Colonic mucosa (tissue), 4 donors: ENCODE measurements at regions of chr16 and their contacts with region 1.

Region 1: DNA sequence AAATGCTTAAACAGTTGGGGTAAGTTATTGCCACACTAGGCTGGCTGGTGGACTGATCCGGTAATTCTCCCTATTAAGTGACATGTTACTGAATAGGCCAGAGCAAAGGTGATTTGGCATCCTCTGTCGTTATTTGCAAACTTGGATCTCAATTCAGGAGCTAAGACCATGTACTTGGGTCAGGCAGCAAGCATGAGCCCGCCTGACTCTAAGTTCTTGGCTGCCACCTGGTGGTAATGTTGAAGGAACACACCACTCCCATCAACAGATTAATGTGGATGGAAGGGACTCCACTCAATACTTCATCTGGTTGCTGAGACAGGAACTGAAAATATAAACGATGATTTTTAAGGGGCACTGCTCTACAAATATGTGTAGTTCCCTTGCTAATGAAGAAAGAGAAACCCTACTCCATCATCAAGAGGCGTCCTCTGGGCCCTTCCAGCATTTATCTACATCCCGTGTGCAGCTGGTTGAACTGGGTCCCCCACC is 70.8 kb downstream of the EMP2 start:
- DNase-seq: peak; percentile 69
- H3K4me3 ChIP-seq: no peak overlapping the region
- H3K27ac ChIP-seq: no peak overlapping the region
- H3K4me1 ChIP-seq: no peaks in the 10 kb centered on the region
- H3K27me3 ChIP-seq: no peaks in the 10 kb centered on the region
- CTCF ChIP-seq: peak; percentile 78

Region 2: DNA sequence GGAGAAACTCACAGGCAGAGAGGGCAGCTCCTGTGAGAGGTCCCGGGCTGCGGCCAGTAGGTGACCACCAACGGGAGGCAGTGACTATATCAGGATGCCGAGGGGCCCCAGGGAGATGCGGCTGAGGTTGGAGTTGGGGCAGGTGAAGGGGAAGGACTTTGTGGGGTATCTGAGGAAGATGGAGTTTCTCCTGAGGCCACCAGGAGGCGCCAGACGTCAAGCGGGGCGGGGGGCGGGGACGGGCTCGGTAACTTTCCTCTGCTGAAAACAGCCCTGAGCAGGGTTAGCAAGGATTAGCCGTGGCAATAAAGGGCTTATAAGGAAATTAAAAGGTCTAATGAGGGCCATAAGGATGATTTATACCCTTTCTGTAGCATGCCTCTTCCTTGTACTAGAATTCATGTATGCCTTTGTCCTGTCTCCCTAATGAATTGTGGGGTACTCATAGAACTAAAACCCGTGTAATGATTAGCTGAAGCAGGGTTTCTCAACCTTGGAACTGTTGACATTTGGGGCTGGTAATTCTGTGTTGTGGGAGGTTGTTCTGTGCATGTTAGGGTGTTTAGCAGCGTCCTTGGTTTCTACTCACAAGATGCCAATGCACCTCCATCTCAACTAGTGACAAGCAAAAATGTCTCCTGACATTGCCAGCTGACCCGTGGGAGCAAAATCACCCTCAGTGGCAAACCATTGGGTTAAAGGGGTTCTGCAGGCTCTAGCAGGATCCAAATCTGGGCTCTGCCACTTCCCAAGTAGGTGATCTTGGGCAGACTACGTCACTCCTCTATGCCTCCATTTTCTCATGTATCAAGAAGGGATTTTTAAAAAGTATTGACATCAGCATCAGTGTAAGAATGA is 252.6 kb before region 1 on chr16:
- intact Hi-C with region 1: loop called (anchors 2 kb)
- DNase-seq: peak; percentile 27
- H3K4me3 ChIP-seq: no peak overlapping the region
- H3K27ac ChIP-seq: no peak overlapping the region
- H3K4me1 ChIP-seq: no peaks in the 10 kb centered on the region
- H3K27me3 ChIP-seq: no peaks in the 10 kb centered on the region
- CTCF ChIP-seq: peak; percentile 63

Region 3: GRCh38 chr16:10314811-10315210 is 194.8 kb before region 1 on chr16:
- intact Hi-C with region 1: loop called (anchors 10 kb)
- DNase-seq: no peak
- H3K4me3 ChIP-seq: no peak overlapping the region
- H3K27ac ChIP-seq: no peak overlapping the region
- H3K4me1 ChIP-seq: no peaks in the 10 kb centered on the region
- H3K27me3 ChIP-seq: no peaks in the 10 kb centered on the region
- CTCF ChIP-seq: no peak

Region 4: GRCh38 chr16:10552998-10553491 is 43.5 kb after region 1 on chr16:
- intact Hi-C with region 1: no loop called
- DNase-seq: peak; percentile 34
- H3K4me3 ChIP-seq: no peak overlapping the region
- H3K27ac ChIP-seq: no peak overlapping the region
- H3K4me1 ChIP-seq: no peaks in the 10 kb centered on the region
- H3K27me3 ChIP-seq: no peaks in the 10 kb centered on the region
- CTCF ChIP-seq: no peak

Region 5: GRCh38 chr16:10663146-10663545 is 153.6 kb after region 1 on chr16:
- intact Hi-C with region 1: no loop called
- DNase-seq: no peak
- H3K4me3 ChIP-seq: no peak overlapping the region
- H3K27ac ChIP-seq: no peak overlapping the region
- H3K4me1 ChIP-seq: no peaks in the 10 kb centered on the region
- H3K27me3 ChIP-seq: no peaks in the 10 kb centered on the region
- CTCF ChIP-seq: no peak

Region 6: DNA sequence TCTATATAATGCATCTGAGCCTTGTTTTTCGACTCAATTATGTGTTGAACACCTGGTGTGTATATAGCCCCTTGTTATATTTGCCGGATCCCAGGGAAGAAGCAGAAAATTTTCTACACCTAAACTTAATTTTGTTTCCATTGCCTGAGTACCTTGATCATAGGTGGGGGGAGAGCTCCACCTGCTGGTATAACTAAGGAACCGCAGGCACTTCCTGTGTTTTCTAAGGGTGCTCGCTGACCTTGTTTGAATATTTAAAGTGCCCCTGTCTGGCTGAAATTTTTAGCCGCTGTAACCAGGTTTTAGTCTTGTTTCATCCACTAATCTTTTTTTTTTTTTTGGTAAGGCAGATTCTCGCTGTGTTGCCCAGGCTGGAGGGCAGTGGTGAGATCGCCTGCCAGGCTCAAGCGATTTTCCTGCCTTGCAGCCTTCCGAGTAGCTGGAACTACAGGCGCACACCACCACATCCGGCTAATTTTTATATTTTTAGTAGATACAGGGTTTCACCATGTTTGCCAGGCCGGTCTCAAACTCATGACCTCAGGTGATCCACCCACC is 227.6 kb after region 1 on chr16:
- intact Hi-C with region 1: loop called (anchors 2 kb)
- DNase-seq: peak; percentile 78
- H3K4me3 ChIP-seq: peak overlapping the region; percentile 20
- H3K27ac ChIP-seq: peak overlapping the region; percentile 46
- H3K4me1 ChIP-seq: no peaks in the 10 kb centered on the region
- H3K27me3 ChIP-seq: no peaks in the 10 kb centered on the region
- CTCF ChIP-seq: peak; percentile 88

Region 7: GRCh38 chr16:10918294-10919002 is 408.9 kb after region 1 on chr16:
- intact Hi-C with region 1: loop called (anchors 5 kb)
- DNase-seq: peak; percentile 95
- H3K4me3 ChIP-seq: no peak overlapping the region
- H3K27ac ChIP-seq: no peak overlapping the region
- H3K4me1 ChIP-seq: no peaks in the 10 kb centered on the region
- H3K27me3 ChIP-seq: no peaks in the 10 kb centered on the region
- CTCF ChIP-seq: peak; percentile 93